Activated CD4-positive, alpha-beta T cell treated with anti-CD3 and anti-CD28 coated beads, Interleukin-2, amount 10 ng/mL, durations not matched to agents 24 days and 14 days (primary cell): ENCODE measurements at regions of chr6 and their contacts with region 1.

Region 1: DNA sequence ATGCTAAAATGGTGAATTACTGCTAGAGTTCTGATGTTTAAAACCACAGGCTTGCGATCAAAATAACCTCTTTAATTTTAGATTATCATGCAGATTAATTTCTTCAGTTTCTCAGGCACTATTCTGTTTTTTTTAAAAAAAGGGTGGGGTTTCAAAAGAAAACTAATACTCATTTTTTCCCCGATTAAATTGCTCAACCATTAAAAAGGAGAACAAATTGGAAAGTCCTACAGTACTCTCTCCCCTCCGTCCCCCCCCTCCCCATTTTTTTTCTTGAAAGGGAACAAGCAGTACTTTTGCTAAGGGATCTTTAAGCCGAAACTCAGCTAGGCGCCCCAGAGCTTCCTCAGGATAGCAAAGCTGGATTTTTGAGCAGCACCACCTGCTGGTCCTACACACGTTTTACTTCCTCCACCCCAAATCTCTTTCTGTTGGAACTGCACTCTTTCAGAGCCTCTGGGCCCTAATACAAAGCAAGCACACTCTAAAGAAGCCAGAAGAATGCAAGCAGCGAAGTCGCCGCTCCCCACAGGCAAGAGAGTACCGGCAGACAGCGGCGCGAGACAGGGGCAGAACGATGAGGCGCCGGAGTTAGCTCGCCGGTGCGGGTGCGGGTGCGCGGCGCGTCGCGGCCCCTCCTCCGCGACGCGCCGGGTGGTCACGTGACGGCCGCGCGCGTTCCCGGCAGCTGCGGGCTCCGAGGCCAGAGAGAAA is at the start of gene RNF146:
- DNase-seq: peak; percentile 92
- H3K4me3 Mint-ChIP-seq: peak within 1 kb of the TSS; percentile 91
- H3K27ac Mint-ChIP-seq: peak within 1 kb of the TSS; percentile 99
- H3K4me1 Mint-ChIP-seq: peaks cover 29% of the 10 kb centered on the region
- H3K27me3 Mint-ChIP-seq: peaks cover 30% of the 10 kb centered on the region
- total RNA-seq, gene RNF146: 16.7 and 18.4 TPM in 2 replicates

Region 2: GRCh38 chr6:125301435-125302391 is 1964.6 kb before region 1 on chr6 and contains the start of gene HDDC2:
- intact Hi-C with region 1: loop called (anchors 5 kb)
- DNase-seq: peak; percentile 87
- H3K4me3 Mint-ChIP-seq: peak within 1 kb of the TSS; percentile 88
- H3K27ac Mint-ChIP-seq: peak within 1 kb of the TSS; percentile 88
- H3K4me1 Mint-ChIP-seq: peaks cover 37% of the 10 kb centered on the region
- H3K27me3 Mint-ChIP-seq: peaks cover 19% of the 10 kb centered on the region
- total RNA-seq, gene HDDC2: 89.6 and 92.4 TPM in 2 replicates

Region 3: GRCh38 chr6:127186889-127187288 is 79.4 kb before region 1 on chr6:
- intact Hi-C with region 1: loop called (anchors 1 kb)
- DNase-seq: peak; percentile 87
- H3K4me3 Mint-ChIP-seq: no peak overlapping the region
- H3K27ac Mint-ChIP-seq: no peak overlapping the region
- H3K4me1 Mint-ChIP-seq: no peaks in the 10 kb centered on the region
- H3K27me3 Mint-ChIP-seq: peaks cover 20% of the 10 kb centered on the region

Region 4: GRCh38 chr6:127277878-127278843 is 11.8 kb after region 1 on chr6:
- intact Hi-C with region 1: loop called (anchors 1 kb)
- DNase-seq: no peak
- H3K4me3 Mint-ChIP-seq: no peak overlapping the region
- H3K27ac Mint-ChIP-seq: no peak overlapping the region
- H3K4me1 Mint-ChIP-seq: peaks cover 6% of the 10 kb centered on the region
- H3K27me3 Mint-ChIP-seq: no peaks in the 10 kb centered on the region

Region 5: DNA sequence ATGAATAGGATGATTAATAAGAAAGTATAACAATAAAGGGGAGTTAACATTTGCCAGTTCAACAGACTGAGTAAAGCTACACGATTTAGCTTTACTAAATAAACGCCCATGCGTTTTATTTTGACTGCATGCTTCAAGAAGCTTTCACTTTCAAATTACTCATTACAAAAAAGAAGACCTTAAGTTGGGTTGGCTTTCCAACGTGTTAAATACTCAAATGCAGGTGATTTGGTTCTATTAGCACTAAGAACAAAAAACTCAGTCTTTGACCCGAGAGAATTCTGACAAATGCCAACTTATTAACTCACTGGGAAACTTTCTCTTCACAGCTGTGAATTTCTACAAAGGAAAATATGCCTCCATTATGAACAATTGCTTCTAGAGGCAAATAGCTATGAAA is 25.2 kb after region 1 on chr6:
- intact Hi-C with region 1: loop called (anchors 1 kb)
- DNase-seq: no peak
- H3K4me3 Mint-ChIP-seq: peak overlapping the region; percentile 20
- H3K27ac Mint-ChIP-seq: peak overlapping the region; percentile 76
- H3K4me1 Mint-ChIP-seq: peaks cover 26% of the 10 kb centered on the region
- H3K27me3 Mint-ChIP-seq: no peaks in the 10 kb centered on the region

Region 6: DNA sequence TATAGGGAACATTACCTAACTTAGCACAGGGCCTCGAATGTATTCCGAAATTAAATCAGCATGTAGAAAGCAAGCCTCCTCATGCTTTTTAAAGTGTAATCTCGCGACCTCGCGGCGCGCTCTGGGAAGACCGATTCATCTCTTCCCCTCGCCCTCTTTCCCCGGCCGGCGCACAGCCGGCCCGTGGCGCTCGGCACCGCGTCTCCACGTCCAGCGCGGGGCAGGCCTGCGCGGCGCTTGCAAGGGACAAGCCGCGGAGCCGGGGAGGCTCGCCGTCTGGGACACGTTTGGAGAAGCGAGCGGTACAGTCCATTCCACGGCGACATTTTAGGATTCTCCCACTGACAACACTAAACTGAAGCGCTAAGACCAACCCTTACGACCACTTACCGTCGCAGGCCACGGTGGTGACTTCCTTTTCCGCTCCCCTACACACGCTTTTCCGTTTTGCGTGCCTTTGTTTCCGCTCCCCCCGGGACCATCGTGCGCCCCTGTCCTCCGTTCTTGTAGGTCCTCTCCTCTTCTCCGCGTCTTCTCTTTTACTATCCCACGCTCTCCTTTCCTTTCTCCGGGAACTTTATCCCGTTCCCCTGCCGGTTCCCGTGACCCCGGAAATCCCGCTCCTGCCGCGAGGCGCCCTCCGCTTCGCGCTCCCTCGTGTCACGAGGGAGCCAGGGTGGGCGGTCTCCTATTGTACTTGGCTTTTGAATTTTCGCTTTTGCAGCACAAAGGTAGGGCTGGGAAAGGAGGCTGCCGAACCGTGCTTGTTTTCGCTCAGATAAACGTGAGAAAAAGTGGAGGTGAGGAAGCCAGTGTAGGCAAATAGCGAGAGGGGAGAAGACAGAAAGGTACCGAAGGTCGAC is 76.8 kb after region 1 on chr6 and contains the start of gene ECHDC1:
- intact Hi-C with region 1: loop called (anchors 1 kb)
- DNase-seq: peak; percentile 91
- H3K4me3 Mint-ChIP-seq: no peak within 1 kb of the TSS
- H3K27ac Mint-ChIP-seq: no peak within 1 kb of the TSS
- H3K4me1 Mint-ChIP-seq: peaks cover 18% of the 10 kb centered on the region
- H3K27me3 Mint-ChIP-seq: no peaks in the 10 kb centered on the region
- total RNA-seq, gene ECHDC1: 60.2 and 63.1 TPM in 2 replicates